ENCODE measurements at regions of chr16 and their contacts with region 1.

Region 1: DNA sequence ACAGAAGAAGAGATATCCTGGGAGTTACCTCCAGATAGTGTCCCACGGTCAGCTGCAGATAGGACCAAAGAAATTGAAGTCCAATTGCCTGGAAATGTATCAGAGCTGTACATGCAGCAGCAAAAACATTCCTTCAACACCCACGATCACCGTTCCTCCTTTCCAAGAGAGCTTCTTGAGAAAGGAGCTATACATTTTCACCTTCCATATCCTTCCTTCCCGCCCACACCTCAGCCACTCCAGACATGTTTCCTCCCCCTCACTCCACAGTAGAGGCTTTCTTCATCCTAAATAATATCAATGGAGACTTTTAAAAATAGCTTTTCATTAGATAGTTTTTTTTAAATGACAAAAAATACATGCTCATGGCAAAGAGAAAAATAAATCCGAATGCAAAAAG is 87.6 kb downstream of the HS3ST2 start:
- DNase-seq: no peak
- ATAC-seq: no peak
- H3K4me3 ChIP-seq: no peak overlapping the region
- H3K27ac ChIP-seq: no peak overlapping the region
- H3K4me1 ChIP-seq: no peaks in the 10 kb centered on the region
- H3K27me3 ChIP-seq: peaks cover 0 to 14% (median 2%) of the 10 kb centered on the region in 4 donors
- CTCF ChIP-seq: no peak

Region 2: GRCh38 chr16:23052908-23053580 is 151.5 kb after region 1 on chr16:
- intact Hi-C with region 1: loop called in 1 of 3 experiments (anchors 10 kb)
- DNase-seq: no peak
- ATAC-seq: no peak
- H3K4me3 ChIP-seq: no peak overlapping the region
- H3K27ac ChIP-seq: no peak overlapping the region
- H3K4me1 ChIP-seq: no peaks in the 10 kb centered on the region
- H3K27me3 ChIP-seq: peaks cover 0 to 12% (median 0%) of the 10 kb centered on the region in 4 donors
- CTCF ChIP-seq: no peak